ENCODE measurements at regions of chr5 and their contacts with region 1.

Region 1: DNA sequence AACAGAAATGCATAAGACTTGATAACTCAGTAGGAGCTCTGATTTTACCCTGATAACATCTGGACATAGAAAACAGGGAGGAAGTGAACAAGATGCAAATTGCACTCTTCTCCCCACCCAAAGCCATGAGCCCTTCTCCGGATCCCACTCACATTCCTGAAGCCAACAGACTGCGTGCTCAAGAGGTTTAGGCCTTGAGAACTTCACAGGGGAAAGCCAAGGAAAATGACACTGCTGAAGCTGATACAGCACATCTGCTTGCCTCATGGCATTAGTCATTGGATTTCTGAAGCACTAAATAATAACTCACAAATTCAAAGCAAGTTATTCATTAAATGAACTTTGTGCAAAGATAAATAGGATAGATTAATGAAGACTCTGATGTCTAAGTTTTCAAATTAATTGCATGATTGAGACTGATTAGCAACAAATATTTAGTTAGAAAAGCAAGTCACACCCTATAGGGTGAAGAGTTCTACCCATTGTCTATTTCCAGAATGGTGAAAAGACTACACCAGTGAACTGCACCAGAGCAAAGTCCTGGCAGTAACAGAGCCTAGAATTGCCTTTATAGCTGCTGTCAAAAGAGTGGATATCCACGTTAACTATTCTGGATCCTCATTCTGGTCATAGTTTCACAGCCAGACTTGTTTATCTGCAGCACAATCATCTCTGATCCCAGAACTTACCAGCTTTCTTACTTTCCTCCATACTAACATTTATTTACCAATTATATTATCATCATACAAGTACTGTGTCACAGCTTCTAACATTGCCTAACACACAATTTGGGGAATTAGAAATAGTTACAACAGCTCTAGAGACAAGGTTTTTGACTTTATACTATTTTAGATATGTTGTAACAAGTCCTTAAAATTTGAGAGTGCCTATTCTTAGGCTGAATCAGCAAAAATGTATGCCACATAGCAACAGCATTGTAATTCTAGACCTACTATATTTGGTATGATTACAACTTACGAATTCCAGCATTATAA is 432.1 kb upstream of the RGMB start:
- DNase-seq: peak; percentile 99
- ATAC-seq: peak; percentile 96
- H3K4me3 ChIP-seq: no peak overlapping the region
- H3K27ac ChIP-seq: peak overlapping the region; percentile 72
- H3K4me1 ChIP-seq: peaks cover 7% of the 10 kb centered on the region
- H3K27me3 ChIP-seq: no peaks in the 10 kb centered on the region
- CTCF ChIP-seq: no peak
- POLR2A ChIP-seq: no peak
- RAD21 ChIP-seq: peak; percentile 25; the same call in 1 of the 2 replicates

Region 2: DNA sequence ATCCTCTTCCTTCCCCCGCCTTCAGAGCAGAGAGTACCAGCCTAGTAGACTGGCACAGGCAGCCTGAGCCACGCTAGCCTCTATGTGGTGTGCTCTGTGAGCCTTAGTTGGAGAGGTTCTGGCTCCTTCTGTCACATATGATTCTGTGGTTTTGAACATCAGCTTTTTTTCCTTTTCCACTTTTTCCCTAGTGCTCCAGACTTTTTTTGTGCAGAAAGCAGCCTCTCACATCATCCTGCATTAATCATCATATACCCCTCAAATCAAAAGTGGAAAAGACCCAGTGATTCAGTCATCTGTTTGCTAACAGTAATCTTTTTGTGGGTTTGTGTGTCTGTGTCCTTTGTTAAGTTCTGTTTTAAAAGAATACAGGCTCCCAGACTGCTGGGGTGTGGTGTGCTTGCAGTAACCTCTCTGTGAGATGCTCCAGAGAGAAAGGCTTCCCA is 231.8 kb before region 1 on chr5:
- CTCF ChIA-PET with region 1: no interaction called
- POLR2A ChIA-PET with region 1: no interaction called
- dilution Hi-C with region 1: no loop called
- in situ Hi-C with region 1: no loop called
- intact Hi-C with region 1: loop called (anchors 2 kb)
- DNase-seq: peak; percentile 92
- ATAC-seq: peak; percentile 28
- H3K4me3 ChIP-seq: peak overlapping the region; percentile 3; the same call in 1 of the 2 replicates
- H3K27ac ChIP-seq: peak overlapping the region; percentile 99
- H3K4me1 ChIP-seq: peaks cover 10% of the 10 kb centered on the region
- H3K27me3 ChIP-seq: no peaks in the 10 kb centered on the region
- CTCF ChIP-seq: no peak
- POLR2A ChIP-seq: peak; percentile 77; the same call in 1 of the 2 replicates
- RAD21 ChIP-seq: peak; percentile 20; the same call in 1 of the 2 replicates

Region 3: GRCh38 chr5:98248949-98249348 is 92.4 kb before region 1 on chr5:
- CTCF ChIA-PET with region 1: no interaction called
- POLR2A ChIA-PET with region 1: no interaction called
- dilution Hi-C with region 1: no loop called
- in situ Hi-C with region 1: no loop called
- intact Hi-C with region 1: loop called (anchors 2 kb)
- DNase-seq: peak; percentile 96
- ATAC-seq: peak; percentile 97
- H3K4me3 ChIP-seq: no peak overlapping the region
- H3K27ac ChIP-seq: no peak overlapping the region
- H3K4me1 ChIP-seq: 0 out of 2 replicates have a peak, but pooled peaks cover 2% of the 10 kb centered on the region
- H3K27me3 ChIP-seq: no peaks in the 10 kb centered on the region
- CTCF ChIP-seq: no peak
- POLR2A ChIP-seq: no peak
- RAD21 ChIP-seq: no peak

Measured in IMR-90 (cell line).